ENCODE measurements at regions of chr18 and their contacts with region 1.

Region 1: GRCh38 chr18:44411277-44411905 is 269.3 kb upstream of the SETBP1 start:
- DNase-seq: no peak
- H3K4me3 Mint-ChIP-seq: no peak overlapping the region
- H3K27ac Mint-ChIP-seq: no peak overlapping the region
- H3K4me1 Mint-ChIP-seq: no peaks in the 10 kb centered on the region
- H3K27me3 Mint-ChIP-seq: no peaks in the 10 kb centered on the region

Region 2: DNA sequence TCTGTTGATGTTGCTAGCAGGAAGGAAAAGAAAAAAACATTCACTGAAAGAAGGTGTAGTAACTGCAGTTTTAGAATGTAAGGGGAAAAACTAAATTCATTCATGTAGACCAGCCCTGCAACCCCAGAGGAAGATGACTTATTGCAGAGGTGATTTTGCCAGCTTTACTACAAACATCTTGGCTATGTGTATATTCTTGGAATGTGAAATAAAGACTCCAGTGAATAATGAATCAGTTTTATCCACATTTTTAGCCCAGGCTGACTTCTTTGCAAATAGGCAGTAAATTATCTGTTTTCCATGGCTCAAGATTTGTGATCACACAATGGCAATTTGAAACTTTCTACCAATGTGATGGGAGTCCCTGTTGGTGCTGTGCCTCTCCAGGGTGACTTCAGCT is 63.2 kb after region 1 on chr18:
- CTCF ChIA-PET with region 1: no interaction called
- intact Hi-C with region 1: loop called (anchors 10 kb)
- DNase-seq: no peak
- H3K4me3 Mint-ChIP-seq: no peak overlapping the region
- H3K27ac Mint-ChIP-seq: no peak overlapping the region
- H3K4me1 Mint-ChIP-seq: no peaks in the 10 kb centered on the region
- H3K27me3 Mint-ChIP-seq: no peaks in the 10 kb centered on the region

Region 3: GRCh38 chr18:44536046-44536445 is 124.7 kb after region 1 on chr18:
- CTCF ChIA-PET with region 1: no interaction called
- intact Hi-C with region 1: no loop called
- DNase-seq: no peak
- H3K4me3 Mint-ChIP-seq: no peak overlapping the region
- H3K27ac Mint-ChIP-seq: no peak overlapping the region
- H3K4me1 Mint-ChIP-seq: no peaks in the 10 kb centered on the region
- H3K27me3 Mint-ChIP-seq: no peaks in the 10 kb centered on the region